CD14-positive monocyte (primary cell): ENCODE measurements at regions of chr3 and their contacts with region 1.

Region 1: DNA sequence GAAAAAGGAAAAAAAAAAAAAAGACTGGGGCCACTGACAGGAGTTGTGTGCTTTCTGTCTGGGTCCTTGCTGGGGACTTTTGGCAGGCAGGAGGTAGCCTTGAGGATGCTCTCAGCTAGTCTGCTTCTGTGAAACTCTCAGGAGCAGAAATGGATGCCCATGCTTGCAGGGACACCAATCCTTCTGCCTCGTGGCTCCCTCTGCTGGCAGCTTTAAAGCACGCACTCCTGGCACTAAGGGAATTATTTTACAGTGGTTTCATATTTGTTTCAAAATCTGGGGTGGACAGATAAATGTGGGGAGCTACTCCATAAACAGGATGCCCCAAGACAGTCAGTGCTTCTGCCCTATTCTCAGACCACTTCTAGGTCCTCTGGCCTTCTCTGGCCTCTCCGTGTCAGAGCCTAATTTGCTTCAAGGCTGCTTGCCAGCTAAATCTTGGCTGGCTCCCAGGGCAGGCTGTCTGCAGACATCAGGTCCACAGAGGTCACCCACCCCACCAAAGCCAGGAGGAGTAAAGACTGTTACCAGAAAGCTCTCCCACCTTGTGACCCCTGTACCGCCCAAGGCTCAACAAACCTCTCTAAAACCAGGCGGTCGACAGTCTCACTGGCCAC is 17.1 kb downstream of the TRAIP start:
- DNase-seq: peak; percentile 71 to 78 (median 78)
- H3K4me3 ChIP-seq: no peak overlapping the region
- H3K4me3 Mint-ChIP-seq: no peak overlapping the region
- H3K27ac ChIP-seq: no peak overlapping the region
- H3K27ac Mint-ChIP-seq: peak overlapping the region in 5 of 7 donors; percentile 23 to 63 (median 45)
- H3K4me1 ChIP-seq: no peaks in the 10 kb centered on the region
- H3K4me1 Mint-ChIP-seq: no peaks in the 10 kb centered on the region
- H3K27me3 ChIP-seq: no peaks in the 10 kb centered on the region
- H3K27me3 Mint-ChIP-seq: no peaks in the 10 kb centered on the region
- CTCF ChIP-seq: peak; percentile 82

Region 2: DNA sequence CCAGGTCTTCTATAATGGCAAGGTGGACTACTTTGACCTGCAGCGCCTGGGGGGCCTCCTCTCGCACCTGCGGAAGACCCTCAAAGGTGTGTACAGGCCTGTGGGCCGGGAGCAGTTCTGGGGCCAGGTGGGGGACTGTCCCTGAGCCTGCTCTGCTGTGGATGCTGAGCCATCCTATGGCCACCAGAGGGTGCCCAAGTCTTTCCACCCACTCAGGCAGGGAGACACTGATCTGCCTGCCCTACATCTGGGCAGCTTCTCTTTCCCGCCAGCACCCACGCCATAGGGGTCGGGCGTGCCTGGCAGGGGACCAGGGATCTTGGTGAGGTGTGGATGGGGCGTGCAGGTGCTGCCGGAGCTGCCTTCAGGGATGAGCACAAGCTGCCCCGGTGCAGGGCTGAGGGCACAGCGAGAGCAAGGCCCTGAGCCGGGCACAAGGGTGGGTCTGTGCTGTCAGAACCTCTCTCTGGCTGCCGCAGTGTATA is 135.8 kb before region 1 on chr3:
- intact Hi-C with region 1: loop called (anchors 5 kb)
- DNase-seq: peak; percentile 39 to 53 (median 46)
- H3K4me3 ChIP-seq: no peak overlapping the region
- H3K4me3 Mint-ChIP-seq: no peak overlapping the region
- H3K27ac ChIP-seq: no peak overlapping the region
- H3K27ac Mint-ChIP-seq: no peak overlapping the region
- H3K4me1 ChIP-seq: no peaks in the 10 kb centered on the region
- H3K4me1 Mint-ChIP-seq: no peaks in the 10 kb centered on the region
- H3K27me3 ChIP-seq: no peaks in the 10 kb centered on the region
- H3K27me3 Mint-ChIP-seq: peaks cover 0 to 2% (median 0%) of the 10 kb centered on the region in 3 donors
- CTCF ChIP-seq: peak; percentile 76

Region 3: DNA sequence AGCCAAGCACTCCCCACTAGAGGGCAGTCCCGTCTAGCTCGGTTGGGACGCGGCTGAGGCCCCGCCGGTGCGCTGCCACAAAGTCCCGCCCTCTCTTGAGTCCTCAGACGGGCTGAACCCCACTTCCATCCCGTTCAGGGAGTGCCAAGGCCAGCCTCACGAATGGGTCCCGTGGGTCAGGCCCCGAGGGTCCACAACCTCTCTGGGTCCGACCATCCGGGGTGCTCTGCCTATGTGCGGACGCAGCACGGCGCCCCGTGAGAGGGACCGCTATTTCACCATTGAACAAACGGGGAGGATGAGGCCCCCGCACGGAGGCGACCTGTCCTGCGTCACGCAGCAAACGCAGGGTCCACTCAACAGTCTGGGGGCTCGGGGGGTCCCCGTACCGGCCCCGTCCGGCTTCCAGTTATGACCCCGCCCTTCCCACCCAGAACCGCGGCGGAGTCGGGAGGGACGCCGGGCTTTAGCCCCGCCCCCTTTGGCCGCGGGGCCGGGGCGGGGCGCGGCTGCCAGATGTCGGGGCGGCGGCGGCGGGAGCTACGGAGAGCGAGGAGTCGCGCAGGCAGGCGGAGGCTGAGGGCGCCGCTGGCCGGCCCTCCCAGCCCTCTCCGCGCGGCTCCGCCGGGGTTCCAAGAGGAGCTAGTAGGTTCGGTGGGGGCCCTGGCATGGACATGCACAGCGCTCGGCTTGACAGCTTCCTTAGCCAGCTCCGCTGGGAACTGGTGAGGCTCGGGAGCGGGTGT is 36.4 kb before region 1 on chr3 and contains the start of gene INKA1:
- intact Hi-C with region 1: loop called (anchors 1 to 2 kb)
- DNase-seq: peak; percentile 78 to 86 (median 80)
- H3K4me3 ChIP-seq: peak within 1 kb of the TSS; percentile 76 to 99 (median 99)
- H3K4me3 Mint-ChIP-seq: peak within 1 kb of the TSS; percentile 90 to 95
- H3K27ac ChIP-seq: peak within 1 kb of the TSS; percentile 45 to 84
- H3K27ac Mint-ChIP-seq: peak within 1 kb of the TSS; percentile 83 to 93 (median 92)
- H3K4me1 ChIP-seq: peaks cover 46 to 56% of the 10 kb centered on the region in 2 donors
- H3K4me1 Mint-ChIP-seq: peaks cover 56% of the 10 kb centered on the region
- H3K27me3 ChIP-seq: peaks cover 0 to 5% of the 10 kb centered on the region in 2 donors
- H3K27me3 Mint-ChIP-seq: peaks cover 15 to 22% (median 17%) of the 10 kb centered on the region in 3 donors
- CTCF ChIP-seq: peak; percentile 95
- polyA plus RNA-seq, gene INKA1: 0.43 to 1.3 (median 1.3) TPM

Region 4: GRCh38 chr3:50015918-50016317 is 176.6 kb after region 1 on chr3:
- intact Hi-C with region 1: no loop called
- DNase-seq: no peak
- H3K4me3 ChIP-seq: no peak overlapping the region
- H3K4me3 Mint-ChIP-seq: no peak overlapping the region
- H3K27ac ChIP-seq: no peak overlapping the region
- H3K27ac Mint-ChIP-seq: no peak overlapping the region
- H3K4me1 ChIP-seq: no peaks in the 10 kb centered on the region
- H3K4me1 Mint-ChIP-seq: no peaks in the 10 kb centered on the region
- H3K27me3 ChIP-seq: no peaks in the 10 kb centered on the region
- H3K27me3 Mint-ChIP-seq: no peaks in the 10 kb centered on the region
- CTCF ChIP-seq: no peak